Heart right ventricle (tissue), 16 donors: ENCODE measurements at regions of chr4 and their contacts with region 1.

Region 1: DNA sequence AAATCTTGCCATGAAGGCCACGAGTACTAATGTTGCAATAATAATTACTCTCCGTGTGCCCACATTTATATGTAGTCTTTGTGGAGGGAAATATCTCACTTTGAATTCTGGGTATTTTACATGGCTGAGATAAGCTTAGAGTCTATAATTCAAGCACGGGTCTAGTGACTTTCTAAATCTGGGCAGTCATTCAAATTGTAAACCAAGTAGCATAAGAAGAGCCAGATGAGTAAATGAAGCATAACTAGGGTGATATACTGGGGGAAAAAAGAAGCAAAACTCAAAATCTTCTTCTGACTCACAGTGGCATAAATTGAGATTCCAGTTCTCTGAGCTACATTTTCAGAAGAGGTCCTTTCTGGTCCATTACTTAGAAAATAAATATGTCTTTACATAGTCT is 53.0 kb downstream of the MAPK10 start:
- DNase-seq: no peak
- ATAC-seq: no peak
- H3K4me3 ChIP-seq: no peak overlapping the region
- H3K27ac ChIP-seq: no peak overlapping the region
- H3K4me1 ChIP-seq: no peaks in the 10 kb centered on the region
- H3K27me3 ChIP-seq: no peaks in the 10 kb centered on the region
- CTCF ChIP-seq: no peak

Region 2: DNA sequence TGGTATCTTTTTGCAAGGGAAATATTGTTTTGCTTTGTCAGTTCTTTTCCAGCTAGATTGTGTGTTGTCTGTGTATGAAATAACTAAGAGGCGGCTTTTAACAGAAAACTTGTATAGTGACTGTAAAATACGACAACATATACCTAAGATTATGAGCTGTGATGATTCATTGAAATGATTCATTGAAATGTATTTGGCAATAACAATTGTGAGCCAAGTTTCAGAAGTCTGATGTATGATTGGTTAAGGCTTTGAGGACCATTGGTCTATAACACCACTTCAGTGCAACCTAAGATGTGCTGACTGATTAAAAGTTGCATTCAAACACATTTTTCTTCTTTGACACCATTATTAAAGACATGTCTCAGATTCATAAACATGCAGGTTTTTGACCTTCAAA is 363.9 kb after region 1 on chr4:
- intact Hi-C with region 1: loop called in 1 of 10 experiments (anchors 5 kb)
- DNase-seq: no peak
- ATAC-seq: no peak
- H3K4me3 ChIP-seq: no peak overlapping the region
- H3K27ac ChIP-seq: no peak overlapping the region
- H3K4me1 ChIP-seq: no peaks in the 10 kb centered on the region
- H3K27me3 ChIP-seq: no peaks in the 10 kb centered on the region
- CTCF ChIP-seq: no peak